ENCODE measurements at regions of chr9 and their contacts with region 1.

Region 1: DNA sequence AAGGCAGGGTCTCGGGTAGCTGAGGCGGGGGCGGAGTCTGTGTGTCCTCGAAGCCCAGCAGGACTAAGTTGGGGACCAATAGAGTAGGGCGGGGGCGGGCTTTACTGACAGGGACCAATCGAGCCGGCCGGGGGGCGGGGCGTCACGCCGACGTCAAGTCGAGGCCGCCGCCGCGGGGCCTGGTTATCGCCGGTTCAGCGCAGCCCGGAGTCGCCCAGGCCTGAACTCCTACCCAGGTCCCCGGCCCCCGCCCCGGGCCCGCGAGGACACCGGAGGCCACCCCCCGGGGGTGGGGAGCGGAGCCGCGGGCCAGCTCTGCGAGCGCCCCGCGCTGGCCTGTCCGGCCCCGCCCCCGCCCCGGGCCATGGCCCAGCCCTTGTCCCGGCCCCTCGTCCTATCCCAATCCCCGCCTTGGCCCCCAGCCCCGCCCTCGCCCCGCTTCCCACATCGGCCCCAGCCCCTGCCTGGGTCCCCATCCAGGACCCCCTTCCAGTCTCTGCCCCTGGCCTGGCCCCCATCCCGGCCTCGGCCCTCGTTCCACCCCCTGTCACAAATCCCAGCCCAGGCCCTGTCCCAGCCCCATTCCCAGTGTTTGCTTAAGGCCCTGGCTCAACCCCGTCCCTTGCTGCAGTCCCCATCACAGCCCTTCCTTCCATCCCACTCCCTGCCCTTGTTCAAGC is at the start of gene TMEM8B:
- DNase-seq: no peak
- ATAC-seq: peak; percentile 90
- H3K4me3 ChIP-seq: peak within 1 kb of the TSS; percentile 78
- H3K27ac ChIP-seq: peak within 1 kb of the TSS; percentile 45; the same call in 1 of the 2 replicates
- H3K4me1 ChIP-seq: peaks cover 15% of the 10 kb centered on the region
- H3K27me3 ChIP-seq: no peaks in the 10 kb centered on the region
- CTCF ChIP-seq: no peak
- EP300 ChIP-seq: no peak
- POLR2A ChIP-seq: peak; percentile 76
- RAD21 ChIP-seq: no peak
- polyA plus RNA-seq, gene TMEM8B: 0.19 to 0.71 TPM

Region 2: DNA sequence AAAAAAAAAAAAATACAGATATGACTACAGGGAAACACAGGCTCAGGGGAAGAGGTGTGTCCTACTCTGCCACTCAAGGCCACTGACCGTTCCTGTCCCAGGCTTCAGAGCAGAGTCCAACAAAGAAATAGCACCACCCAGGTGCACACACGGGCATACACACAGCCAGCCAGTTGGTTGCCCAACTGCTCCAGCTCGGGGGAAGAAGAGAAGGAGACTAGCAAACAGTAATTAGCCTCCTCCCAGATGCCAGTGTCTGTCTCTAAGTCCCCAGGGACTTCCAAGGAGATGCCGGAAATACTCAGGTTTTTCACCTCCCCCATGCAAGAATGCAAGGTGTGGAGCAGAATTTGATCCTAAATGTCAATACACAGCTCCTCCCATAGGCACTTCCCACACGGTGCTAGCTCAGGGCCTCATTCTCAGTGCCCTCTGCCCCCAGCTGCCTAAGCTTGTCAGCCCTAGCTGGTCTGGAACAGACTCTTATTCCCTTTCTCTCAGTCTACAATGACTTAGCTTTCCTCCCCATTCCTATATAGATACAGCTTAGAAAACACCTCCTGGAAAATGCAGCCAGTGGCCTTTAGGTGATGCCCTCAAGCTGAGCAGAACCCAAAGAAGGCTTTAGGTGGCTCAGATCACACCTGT is 1454.2 kb before region 1 on chr9:
- CTCF ChIA-PET with region 1: no interaction called
- POLR2A ChIA-PET with region 1: no interaction called
- RAD21 ChIA-PET with region 1: no interaction called
- SMC1A ChIA-PET with region 1: no interaction called
- in situ Hi-C with region 1: no loop called
- intact Hi-C with region 1: no loop called
- DNase-seq: no peak
- ATAC-seq: no peak
- H3K4me3 ChIP-seq: no peak overlapping the region
- H3K27ac ChIP-seq: no peak overlapping the region
- H3K4me1 ChIP-seq: peaks cover 12% of the 10 kb centered on the region
- H3K27me3 ChIP-seq: no peaks in the 10 kb centered on the region
- CTCF ChIP-seq: no peak
- EP300 ChIP-seq: no peak
- POLR2A ChIP-seq: no peak
- RAD21 ChIP-seq: no peak

Region 3: GRCh38 chr9:35696525-35697215 is 132.6 kb before region 1 on chr9:
- CTCF ChIA-PET with region 1: interaction called, 11 read pairs
- POLR2A ChIA-PET with region 1: no interaction called
- RAD21 ChIA-PET with region 1: interaction called, 7 read pairs
- SMC1A ChIA-PET with region 1: interaction called, 4 read pairs
- in situ Hi-C with region 1: no loop called
- intact Hi-C with region 1: no loop called
- DNase-seq: no peak
- ATAC-seq: peak; percentile 99
- H3K4me3 ChIP-seq: no peak overlapping the region
- H3K27ac ChIP-seq: no peak overlapping the region
- H3K4me1 ChIP-seq: no peaks in the 10 kb centered on the region
- H3K27me3 ChIP-seq: no peaks in the 10 kb centered on the region
- CTCF ChIP-seq: peak; percentile 78 to 98 (median 97)
- EP300 ChIP-seq: no peak
- POLR2A ChIP-seq: no peak
- RAD21 ChIP-seq: peak; percentile 61

Region 4: DNA sequence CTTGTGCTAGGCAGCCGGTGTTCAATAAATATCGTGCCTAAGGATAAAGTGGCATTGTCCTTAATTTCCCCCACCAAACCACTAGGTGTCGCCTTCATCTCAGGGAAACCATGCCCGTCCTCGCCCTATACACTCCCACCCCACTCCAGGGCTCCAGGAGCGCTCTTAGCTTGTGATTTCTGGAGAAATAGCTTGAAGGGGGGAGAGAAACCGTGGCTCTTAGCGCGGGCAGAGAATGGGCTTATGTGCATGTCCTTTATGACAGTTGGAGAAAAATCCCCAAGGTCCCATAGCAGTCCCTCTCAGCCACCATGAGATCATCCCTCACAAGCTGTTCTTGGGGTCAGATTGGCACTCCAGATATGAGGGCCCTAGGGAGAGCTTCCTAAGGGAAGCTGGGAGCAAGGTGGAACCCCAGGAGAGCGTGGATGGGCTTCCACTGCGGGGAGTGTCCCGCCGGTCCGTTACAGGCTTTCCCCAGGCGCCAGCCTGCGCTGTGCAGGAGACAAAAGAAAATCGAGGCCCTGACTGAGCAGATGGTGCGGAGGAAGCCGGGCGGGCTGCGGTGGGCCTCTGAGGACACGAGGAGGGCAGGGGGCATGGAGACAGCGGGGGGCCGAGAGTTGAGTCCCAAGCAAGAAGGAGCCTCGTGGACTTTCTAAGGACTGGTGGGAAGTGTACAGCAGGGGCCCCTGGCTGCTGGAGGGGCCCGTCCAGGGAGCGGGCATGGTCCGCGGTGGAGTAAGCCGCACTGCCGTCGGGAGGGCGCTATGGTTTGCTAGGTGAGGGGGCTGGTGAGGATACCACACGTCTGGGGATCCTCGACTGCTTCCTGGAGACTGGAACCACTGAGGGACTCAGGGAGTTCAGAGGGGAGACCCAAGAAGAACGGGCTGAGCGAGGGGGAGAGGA is 38.6 kb before region 1 on chr9:
- CTCF ChIA-PET with region 1: interaction called, 101 read pairs
- POLR2A ChIA-PET with region 1: interaction called, 3 read pairs
- RAD21 ChIA-PET with region 1: interaction called, 26 read pairs
- SMC1A ChIA-PET with region 1: interaction called, 26 read pairs
- in situ Hi-C with region 1: no loop called
- intact Hi-C with region 1: loop called (anchors 1 kb)
- DNase-seq: no peak
- ATAC-seq: peak; percentile 98
- H3K4me3 ChIP-seq: no peak overlapping the region
- H3K27ac ChIP-seq: no peak overlapping the region
- H3K4me1 ChIP-seq: no peaks in the 10 kb centered on the region
- H3K27me3 ChIP-seq: no peaks in the 10 kb centered on the region
- CTCF ChIP-seq: peak; percentile 84 to 94 (median 91)
- EP300 ChIP-seq: no peak
- POLR2A ChIP-seq: no peak
- RAD21 ChIP-seq: peak; percentile 83

Region 5: GRCh38 chr9:35814841-35815543 is 14.2 kb before region 1 on chr9 and contains the start of gene HINT2:
- CTCF ChIA-PET with region 1: interaction called, 51 read pairs
- POLR2A ChIA-PET with region 1: interaction called, 6 read pairs
- RAD21 ChIA-PET with region 1: interaction called, 10 read pairs
- SMC1A ChIA-PET with region 1: interaction called, 26 read pairs
- in situ Hi-C with region 1: no loop called
- intact Hi-C with region 1: no loop called
- DNase-seq: peak; percentile 95
- ATAC-seq: peak; percentile 92
- H3K4me3 ChIP-seq: peak within 1 kb of the TSS; percentile 79
- H3K27ac ChIP-seq: peak within 1 kb of the TSS; percentile 75
- H3K4me1 ChIP-seq: peaks cover 33% of the 10 kb centered on the region
- H3K27me3 ChIP-seq: no peaks in the 10 kb centered on the region; a peak in 1 of 4 replicates
- CTCF ChIP-seq: no peak
- EP300 ChIP-seq: no peak
- POLR2A ChIP-seq: peak; percentile 95
- RAD21 ChIP-seq: no peak
- polyA plus RNA-seq, gene HINT2: 12.1 to 32.0 TPM

Region 6: GRCh38 chr9:35859310-35859989 is 30.2 kb after region 1 on chr9:
- CTCF ChIA-PET with region 1: interaction called, 92 read pairs
- POLR2A ChIA-PET with region 1: no interaction called
- RAD21 ChIA-PET with region 1: interaction called, 18 read pairs
- SMC1A ChIA-PET with region 1: interaction called, 5 read pairs
- in situ Hi-C with region 1: no loop called
- intact Hi-C with region 1: no loop called
- DNase-seq: no peak
- ATAC-seq: peak; percentile 69
- H3K4me3 ChIP-seq: no peak overlapping the region
- H3K27ac ChIP-seq: no peak overlapping the region
- H3K4me1 ChIP-seq: no peaks in the 10 kb centered on the region
- H3K27me3 ChIP-seq: no peaks in the 10 kb centered on the region
- CTCF ChIP-seq: peak in 1 of 3 experiments; percentile 22; a peak in 2 of 6 replicates
- EP300 ChIP-seq: no peak
- POLR2A ChIP-seq: no peak
- RAD21 ChIP-seq: no peak

Region 7: DNA sequence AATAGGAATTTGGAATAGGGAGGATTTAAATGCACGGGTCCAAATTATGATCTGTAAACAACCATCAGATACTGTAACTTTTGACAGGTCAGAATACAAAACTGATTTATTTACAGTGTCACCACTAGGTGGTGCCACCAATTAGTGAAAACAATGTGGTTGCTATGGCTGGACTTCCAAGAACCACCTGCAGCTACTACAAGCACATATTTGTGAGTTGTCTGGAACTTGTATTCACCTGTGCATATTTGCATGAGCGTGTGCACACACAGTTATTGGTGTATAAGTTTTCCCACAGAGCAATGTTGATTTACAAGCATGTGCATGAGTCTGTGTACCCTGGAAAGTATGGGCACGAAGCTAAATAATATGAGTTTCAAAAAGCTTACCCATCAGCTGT is 73.8 kb after region 1 on chr9:
- CTCF ChIA-PET with region 1: interaction called, 13 read pairs
- POLR2A ChIA-PET with region 1: no interaction called
- RAD21 ChIA-PET with region 1: interaction called, 3 read pairs
- SMC1A ChIA-PET with region 1: interaction called, 9 read pairs
- in situ Hi-C with region 1: no loop called
- intact Hi-C with region 1: no loop called
- DNase-seq: no peak
- ATAC-seq: peak; percentile 84
- H3K4me3 ChIP-seq: no peak overlapping the region
- H3K27ac ChIP-seq: no peak overlapping the region
- H3K4me1 ChIP-seq: no peaks in the 10 kb centered on the region
- H3K27me3 ChIP-seq: peaks cover 0 to 1% of the 10 kb centered on the region in 2 experiments; a peak in 2 of 4 replicates
- CTCF ChIP-seq: peak; percentile 53 to 73 (median 68); a peak in 5 of 6 replicates
- EP300 ChIP-seq: no peak
- POLR2A ChIP-seq: no peak
- RAD21 ChIP-seq: peak; percentile 65

Region 8: DNA sequence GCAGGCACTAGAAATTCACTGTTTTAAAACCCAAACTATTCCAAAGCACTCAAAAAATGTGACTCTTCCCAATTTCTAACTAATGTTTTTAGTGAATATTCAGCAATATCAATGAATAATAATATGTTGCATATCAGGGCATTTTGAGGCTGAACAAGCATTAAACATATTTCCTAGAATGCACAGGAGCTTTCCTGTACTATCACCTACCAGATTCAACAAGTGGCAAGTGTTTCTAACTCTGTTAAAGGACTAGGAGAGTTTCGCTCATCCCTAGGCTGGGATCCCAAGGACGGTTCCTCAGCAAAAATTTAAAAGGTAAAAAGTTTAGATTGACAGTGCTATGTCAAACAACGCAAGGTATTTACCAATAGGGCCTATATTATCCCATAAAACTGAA is 408.0 kb after region 1 on chr9:
- CTCF ChIA-PET with region 1: no interaction called
- POLR2A ChIA-PET with region 1: no interaction called
- RAD21 ChIA-PET with region 1: no interaction called
- SMC1A ChIA-PET with region 1: no interaction called
- in situ Hi-C with region 1: no loop called
- intact Hi-C with region 1: no loop called
- DNase-seq: no peak
- ATAC-seq: no peak
- H3K4me3 ChIP-seq: no peak overlapping the region
- H3K27ac ChIP-seq: no peak overlapping the region
- H3K4me1 ChIP-seq: no peaks in the 10 kb centered on the region
- H3K27me3 ChIP-seq: no peaks in the 10 kb centered on the region
- CTCF ChIP-seq: no peak
- EP300 ChIP-seq: no peak
- POLR2A ChIP-seq: no peak
- RAD21 ChIP-seq: no peak